ENCODE measurements at regions of chr1 and their contacts with region 1.

Region 1: GRCh38 chr1:93846211-93846991 is 32.6 kb downstream of the DNTTIP2 start:
- DNase-seq: peak; percentile 74 to 95 (median 84)
- ATAC-seq: peak; percentile 46
- H3K4me3 ChIP-seq: peak overlapping the region; percentile 95
- H3K4me3 Mint-ChIP-seq: peak overlapping the region; percentile 89
- H3K27ac ChIP-seq: peak overlapping the region; percentile 79 to 87
- H3K27ac Mint-ChIP-seq: peak overlapping the region; percentile 100
- H3K4me1 ChIP-seq: peaks cover 23% of the 10 kb centered on the region
- H3K4me1 Mint-ChIP-seq: peaks cover 37% of the 10 kb centered on the region
- H3K27me3 ChIP-seq: no peaks in the 10 kb centered on the region
- H3K27me3 Mint-ChIP-seq: peaks cover 7% of the 10 kb centered on the region
- CTCF ChIP-seq: no peak

Region 2: GRCh38 chr1:93179886-93180722 is 666.3 kb before region 1 on chr1 and contains the start of gene TMED5:
- CTCF ChIA-PET with region 1: no interaction called
- POLR2A ChIA-PET with region 1: no interaction called
- intact Hi-C with region 1: loop called in 1 of 2 experiments (anchors 10 kb)
- DNase-seq: peak; percentile 88 to 99 (median 94)
- ATAC-seq: peak; percentile 78
- H3K4me3 ChIP-seq: peak within 1 kb of the TSS; percentile 91
- H3K4me3 Mint-ChIP-seq: peak within 1 kb of the TSS; percentile 93
- H3K27ac ChIP-seq: peak within 1 kb of the TSS; percentile 97 to 98
- H3K27ac Mint-ChIP-seq: peak within 1 kb of the TSS; percentile 95
- H3K4me1 ChIP-seq: peaks cover 25% of the 10 kb centered on the region
- H3K4me1 Mint-ChIP-seq: peaks cover 52% of the 10 kb centered on the region
- H3K27me3 ChIP-seq: no peaks in the 10 kb centered on the region
- H3K27me3 Mint-ChIP-seq: no peaks in the 10 kb centered on the region
- CTCF ChIP-seq: peak; percentile 14
- total RNA-seq, gene TMED5: 42.3 to 43.2 TPM

Region 3: DNA sequence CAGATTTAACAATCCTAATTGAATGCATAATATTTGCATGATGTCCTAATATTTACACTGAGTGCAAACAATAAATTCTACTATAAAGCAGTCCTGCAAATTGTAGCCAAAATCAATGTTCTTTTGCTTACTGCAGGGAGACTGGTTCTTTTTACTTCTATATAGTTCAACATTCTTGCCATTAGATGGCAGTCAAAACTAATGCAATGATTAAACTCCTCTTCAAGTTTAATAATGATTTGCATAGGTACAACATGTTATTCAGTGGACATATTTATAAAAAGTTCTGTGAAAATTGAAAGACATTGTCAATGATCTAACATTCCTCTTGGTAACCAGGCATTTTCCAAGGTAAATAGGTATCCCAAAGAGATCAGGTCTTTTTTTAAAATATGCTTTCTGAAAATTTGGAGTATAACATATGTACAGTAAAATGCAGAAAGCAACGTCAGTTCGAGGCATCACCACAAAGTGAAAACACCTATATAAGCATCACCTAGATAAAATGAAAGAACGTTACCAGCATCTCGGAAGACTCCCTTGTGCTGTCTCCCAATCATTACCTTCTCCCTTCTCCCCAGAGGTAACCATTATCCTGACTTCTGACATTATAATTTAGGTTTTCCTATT is 408.3 kb before region 1 on chr1:
- CTCF ChIA-PET with region 1: no interaction called
- POLR2A ChIA-PET with region 1: no interaction called
- intact Hi-C with region 1: loop called (anchors 5 to 10 kb)
- DNase-seq: peak in 3 of 14 experiments; percentile 52 to 63 (median 60)
- ATAC-seq: peak; percentile 54
- H3K4me3 ChIP-seq: no peak overlapping the region
- H3K4me3 Mint-ChIP-seq: no peak overlapping the region
- H3K27ac ChIP-seq: no peak overlapping the region
- H3K27ac Mint-ChIP-seq: no peak overlapping the region
- H3K4me1 ChIP-seq: no peaks in the 10 kb centered on the region
- H3K4me1 Mint-ChIP-seq: no peaks in the 10 kb centered on the region
- H3K27me3 ChIP-seq: peaks cover 0 to 9% of the 10 kb centered on the region in 2 experiments
- H3K27me3 Mint-ChIP-seq: no peaks in the 10 kb centered on the region
- CTCF ChIP-seq: peak; percentile 77

Region 4: DNA sequence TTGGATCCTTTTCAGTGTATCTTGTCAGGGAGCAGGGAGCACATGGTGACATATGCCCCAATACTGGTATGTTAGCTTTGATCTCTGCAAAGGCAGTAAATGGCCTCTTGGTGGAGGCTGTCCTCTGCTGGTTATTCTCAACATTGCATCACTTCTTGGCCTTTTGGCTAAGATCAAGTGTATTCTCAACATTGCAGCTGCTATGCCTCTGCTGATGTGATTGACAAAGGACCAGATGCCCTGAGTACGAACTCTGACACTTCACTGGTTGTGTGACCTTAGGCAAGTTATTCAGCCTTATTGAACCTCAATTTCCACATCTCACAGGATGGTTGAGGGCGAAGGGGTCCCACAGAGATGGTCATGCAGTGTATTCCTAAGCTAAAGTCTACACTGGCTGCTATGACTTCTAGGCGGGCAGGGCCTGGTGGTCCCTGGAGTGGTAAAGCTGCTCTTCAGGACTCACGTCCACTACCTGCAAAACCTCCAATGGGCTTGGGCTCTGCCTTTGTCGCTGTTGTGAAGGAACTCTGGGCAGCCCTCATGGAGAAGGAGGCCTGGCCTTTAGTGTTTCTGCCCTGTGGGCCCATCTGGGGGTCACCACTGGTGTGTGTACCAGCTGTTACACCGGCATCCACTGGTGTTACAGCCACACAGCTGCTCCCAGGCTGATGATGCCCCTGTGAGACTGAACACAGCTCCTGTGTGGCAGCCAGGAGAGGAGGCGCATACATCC is 32.2 kb before region 1 on chr1:
- CTCF ChIA-PET with region 1: interaction called, 7 read pairs
- POLR2A ChIA-PET with region 1: interaction called, 17 read pairs
- intact Hi-C with region 1: no loop called
- DNase-seq: peak in 9 of 14 experiments; percentile 8 to 72 (median 25)
- ATAC-seq: peak; percentile 31
- H3K4me3 ChIP-seq: no peak overlapping the region
- H3K4me3 Mint-ChIP-seq: no peak overlapping the region
- H3K27ac ChIP-seq: no peak overlapping the region
- H3K27ac Mint-ChIP-seq: no peak overlapping the region
- H3K4me1 ChIP-seq: peaks cover 17% of the 10 kb centered on the region
- H3K4me1 Mint-ChIP-seq: peaks cover 22% of the 10 kb centered on the region
- H3K27me3 ChIP-seq: no peaks in the 10 kb centered on the region
- H3K27me3 Mint-ChIP-seq: no peaks in the 10 kb centered on the region
- CTCF ChIP-seq: peak; percentile 71

Region 5: DNA sequence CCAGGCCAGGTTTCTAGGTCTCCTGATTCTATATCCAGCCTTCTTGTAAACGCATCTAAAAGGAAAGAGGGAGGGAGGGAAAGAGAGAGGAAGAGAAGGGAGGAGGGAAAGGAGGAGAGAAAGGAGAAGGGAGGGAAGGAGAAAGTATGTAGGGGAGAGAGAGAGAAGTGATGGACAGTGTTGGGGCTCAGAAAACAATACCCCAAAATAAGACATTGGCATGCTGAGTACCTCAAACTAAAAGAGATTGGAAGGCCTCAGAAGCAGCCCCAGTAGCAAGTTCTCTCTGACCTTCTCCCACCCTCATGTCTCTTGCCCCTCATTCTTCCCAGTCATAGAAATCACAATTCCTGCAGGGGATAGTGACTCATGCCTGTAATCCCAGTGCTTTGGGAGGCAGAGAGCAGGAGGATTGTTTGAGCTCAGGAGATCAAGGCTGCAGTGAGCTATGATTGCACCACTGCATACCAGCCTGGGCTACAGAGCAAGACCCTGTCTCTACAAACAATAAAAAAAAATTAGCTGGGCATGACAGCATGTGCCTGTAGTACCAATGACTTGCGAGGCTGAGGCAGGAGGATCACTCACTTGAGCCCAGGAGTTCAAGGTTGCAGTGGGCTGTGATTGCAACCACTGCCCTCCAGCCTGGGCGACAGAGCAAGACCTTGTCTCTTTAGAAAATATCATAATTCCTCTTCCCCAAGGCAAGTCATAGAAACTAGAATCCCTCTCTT is 18.6 kb before region 1 on chr1:
- CTCF ChIA-PET with region 1: no interaction called
- POLR2A ChIA-PET with region 1: no interaction called
- intact Hi-C with region 1: no loop called
- DNase-seq: no peak
- ATAC-seq: no peak
- H3K4me3 ChIP-seq: no peak overlapping the region
- H3K4me3 Mint-ChIP-seq: no peak overlapping the region
- H3K27ac ChIP-seq: no peak overlapping the region
- H3K27ac Mint-ChIP-seq: no peak overlapping the region
- H3K4me1 ChIP-seq: no peaks in the 10 kb centered on the region
- H3K4me1 Mint-ChIP-seq: no peaks in the 10 kb centered on the region
- H3K27me3 ChIP-seq: peaks cover 0 to 2% of the 10 kb centered on the region in 2 experiments
- H3K27me3 Mint-ChIP-seq: no peaks in the 10 kb centered on the region
- CTCF ChIP-seq: no peak

Region 6: GRCh38 chr1:94417978-94418663 is 571.7 kb after region 1 on chr1 and contains the start of gene ABCD3:
- CTCF ChIA-PET with region 1: no interaction called
- POLR2A ChIA-PET with region 1: interaction called, 10 read pairs
- intact Hi-C with region 1: loop called in 1 of 2 experiments (anchors 5 kb)
- DNase-seq: peak; percentile 92 to 99 (median 97)
- ATAC-seq: peak; percentile 87
- H3K4me3 ChIP-seq: peak within 1 kb of the TSS; percentile 82
- H3K4me3 Mint-ChIP-seq: no peak within 1 kb of the TSS
- H3K27ac ChIP-seq: peak within 1 kb of the TSS; percentile 61 to 77
- H3K27ac Mint-ChIP-seq: no peak within 1 kb of the TSS
- H3K4me1 ChIP-seq: peaks cover 14% of the 10 kb centered on the region
- H3K4me1 Mint-ChIP-seq: peaks cover 41% of the 10 kb centered on the region
- H3K27me3 ChIP-seq: no peaks in the 10 kb centered on the region
- H3K27me3 Mint-ChIP-seq: no peaks in the 10 kb centered on the region
- CTCF ChIP-seq: no peak
- total RNA-seq, gene ABCD3: 13.0 to 13.5 TPM